ENCODE measurements at regions of chr15 and their contacts with region 1.

Region 1: DNA sequence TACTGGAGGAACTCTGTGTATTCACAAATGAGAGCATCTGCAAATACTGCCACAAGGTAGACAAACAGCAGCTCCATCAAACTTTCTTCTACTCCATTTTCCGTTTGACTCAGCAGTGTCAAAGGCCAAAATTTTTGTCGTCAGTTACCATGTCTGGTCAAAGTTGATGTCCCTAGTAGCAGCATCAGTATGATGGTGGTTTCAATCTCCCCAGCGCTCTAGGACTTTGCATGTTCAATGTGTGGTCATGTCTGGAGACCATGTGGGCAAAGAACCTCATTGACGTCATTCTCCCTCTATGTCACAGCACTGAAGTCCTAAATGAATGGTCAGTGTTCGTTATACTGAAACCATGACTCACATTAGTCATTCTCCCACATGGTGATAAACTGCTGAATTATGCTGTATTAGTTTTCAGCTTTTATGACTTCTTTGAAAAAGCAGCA is 23.2 kb downstream of the SHC4 start:
- DNase-seq: peak; percentile 92
- H3K4me3 ChIP-seq: no peak overlapping the region
- CTCF ChIP-seq: no peak

Region 2: DNA sequence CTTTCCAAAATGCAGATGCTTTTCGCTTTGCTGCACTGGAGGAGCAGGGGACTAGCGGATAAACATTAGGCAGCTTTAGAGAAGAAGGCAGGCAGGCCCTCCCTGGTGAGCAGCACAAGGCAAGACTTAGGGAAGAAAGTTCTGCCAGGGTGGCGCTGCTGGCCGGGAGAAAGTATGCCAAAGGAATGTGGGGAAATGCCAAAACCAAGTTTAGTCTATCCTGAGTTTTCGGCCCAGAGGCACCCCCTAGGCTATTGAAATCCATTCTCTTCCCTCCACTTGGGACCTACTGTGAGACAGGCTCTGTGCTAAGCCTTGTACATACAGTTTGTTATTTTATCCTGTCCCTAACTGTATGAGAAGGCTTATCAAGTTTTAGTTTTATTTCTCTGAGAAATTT is 14.1 kb after region 1 on chr15:
- CTCF ChIA-PET with region 1: interaction called, 12 read pairs
- POLR2A ChIA-PET with region 1: no interaction called
- DNase-seq: no peak
- H3K4me3 ChIP-seq: no peak overlapping the region
- CTCF ChIP-seq: peak; percentile 21

Measured in AG04449 (cell line).